Aorta (tissue), 5 donors: ENCODE measurements at regions of chr11 and their contacts with region 1.

Region 1: GRCh38 chr11:93895106-93895862 is 44.9 kb upstream of the VSTM5 start:
- DNase-seq: no peak
- ATAC-seq: peak; percentile 79
- H3K4me3 ChIP-seq: no peak overlapping the region
- H3K27ac ChIP-seq: no peak overlapping the region
- H3K4me1 ChIP-seq: no peaks in the 10 kb centered on the region
- H3K27me3 ChIP-seq: no peaks in the 10 kb centered on the region

Region 2: GRCh38 chr11:93089474-93090102 is 805.7 kb before region 1 on chr11:
- intact Hi-C with region 1: no loop called
- DNase-seq: peak in 1 of 2 donors; percentile 27
- ATAC-seq: no peak
- H3K4me3 ChIP-seq: no peak overlapping the region
- H3K27ac ChIP-seq: no peak overlapping the region
- H3K4me1 ChIP-seq: no peaks in the 10 kb centered on the region
- H3K27me3 ChIP-seq: no peaks in the 10 kb centered on the region

Region 3: DNA sequence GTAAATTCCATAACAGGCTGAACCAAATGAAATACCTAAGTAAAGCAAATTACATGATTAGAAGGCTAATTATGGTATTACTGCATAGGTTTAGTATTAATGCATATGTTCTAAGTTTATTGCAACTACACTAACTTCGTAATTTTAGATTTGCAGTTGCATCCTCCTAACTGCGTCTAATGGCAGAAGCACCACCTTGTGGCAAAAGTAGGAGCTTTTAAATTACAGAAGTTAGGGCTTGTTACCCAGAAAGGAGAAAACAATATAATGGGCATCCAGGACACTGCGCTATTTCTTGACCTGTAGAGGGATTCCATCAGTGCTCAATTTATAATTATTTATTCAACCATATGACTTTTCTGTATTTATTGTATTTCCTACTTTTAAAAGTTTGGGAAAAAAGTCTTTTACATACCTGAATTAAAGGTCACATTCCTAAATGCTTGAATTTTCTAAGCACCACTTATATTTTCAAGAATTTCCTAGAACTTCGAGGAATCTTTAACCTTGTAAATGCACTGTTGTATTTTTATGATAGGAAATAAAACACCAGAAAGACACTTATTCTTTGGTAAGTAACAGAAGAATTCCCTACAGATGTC is 522.2 kb after region 1 on chr11:
- intact Hi-C with region 1: loop called (anchors 5 kb)
- DNase-seq: no peak
- ATAC-seq: no peak
- H3K4me3 ChIP-seq: no peak overlapping the region
- H3K27ac ChIP-seq: no peak overlapping the region
- H3K4me1 ChIP-seq: no peaks in the 10 kb centered on the region
- H3K27me3 ChIP-seq: no peaks in the 10 kb centered on the region

Region 4: DNA sequence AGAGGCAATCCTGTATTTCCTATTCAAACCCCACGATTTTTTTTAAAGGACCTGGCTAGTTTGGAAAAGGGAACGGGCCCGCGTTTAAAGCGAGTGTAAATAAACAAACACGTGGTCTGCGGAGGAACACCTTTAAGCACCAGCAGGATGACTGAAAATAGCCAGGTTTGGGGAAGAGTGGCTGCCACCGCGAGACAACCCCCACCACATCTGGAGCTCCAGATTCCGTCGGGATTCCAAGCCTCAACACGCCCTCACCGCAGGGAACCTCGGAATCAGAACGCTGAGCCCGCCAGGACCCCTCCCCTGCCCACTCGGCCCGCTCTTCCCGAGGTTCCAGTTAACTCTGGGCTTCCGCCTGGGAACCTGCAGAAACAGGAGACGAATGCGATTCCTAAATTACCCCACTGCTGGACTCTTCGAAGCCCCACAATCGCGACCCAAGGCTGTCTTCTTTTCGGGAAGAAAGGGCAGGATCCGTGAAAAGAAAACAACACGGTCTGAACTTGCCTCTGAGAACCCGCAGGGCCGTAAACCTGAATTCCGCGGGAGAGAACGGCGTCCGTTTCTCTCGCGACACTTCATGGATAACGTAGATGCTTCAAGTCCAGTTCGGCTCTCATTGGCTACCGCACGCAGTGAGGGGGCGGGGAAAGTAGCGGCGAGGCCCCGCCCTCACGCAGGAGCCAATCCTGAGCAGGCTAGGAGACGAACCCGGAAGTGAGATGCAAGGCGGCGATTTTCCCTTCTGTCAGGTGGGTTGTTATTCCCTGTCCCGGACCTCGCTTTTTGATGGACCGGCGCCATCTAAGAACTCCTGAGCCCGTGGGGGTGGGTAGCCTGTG is 598.2 kb after region 1 on chr11 and contains the starts of genes ANKRD49 and MRE11:
- intact Hi-C with region 1: loop called in 1 of 2 experiments (anchors 10 kb)
- DNase-seq: peak; percentile 98
- ATAC-seq: peak; percentile 100
- H3K4me3 ChIP-seq: peak within 1 kb of the TSS; percentile 70 to 82
- H3K27ac ChIP-seq: peak within 1 kb of the TSS in 1 of 2 donors; percentile 66
- H3K4me1 ChIP-seq: no peaks in the 10 kb centered on the region
- H3K27me3 ChIP-seq: no peaks in the 10 kb centered on the region
- total RNA-seq, gene ANKRD49: 12.6 to 14.4 TPM
- total RNA-seq, gene MRE11: 16.0 to 27.9 TPM